ENCODE measurements at regions of chr12 and their contacts with region 1.

Region 1: GRCh38 chr12:125402874-125403789 is 337.9 kb downstream of the AACS start:
- DNase-seq: peak; percentile 44
- ATAC-seq: peak; percentile 75
- H3K4me3 ChIP-seq: no peak overlapping the region
- H3K27ac ChIP-seq: no peak overlapping the region
- H3K4me1 ChIP-seq: no peaks in the 10 kb centered on the region
- H3K27me3 ChIP-seq: peaks cover 5% of the 10 kb centered on the region
- CTCF ChIP-seq: peak; percentile 54 to 81 (median 76)
- POLR2A ChIP-seq: no peak
- RAD21 ChIP-seq: peak; percentile 85

Region 2: DNA sequence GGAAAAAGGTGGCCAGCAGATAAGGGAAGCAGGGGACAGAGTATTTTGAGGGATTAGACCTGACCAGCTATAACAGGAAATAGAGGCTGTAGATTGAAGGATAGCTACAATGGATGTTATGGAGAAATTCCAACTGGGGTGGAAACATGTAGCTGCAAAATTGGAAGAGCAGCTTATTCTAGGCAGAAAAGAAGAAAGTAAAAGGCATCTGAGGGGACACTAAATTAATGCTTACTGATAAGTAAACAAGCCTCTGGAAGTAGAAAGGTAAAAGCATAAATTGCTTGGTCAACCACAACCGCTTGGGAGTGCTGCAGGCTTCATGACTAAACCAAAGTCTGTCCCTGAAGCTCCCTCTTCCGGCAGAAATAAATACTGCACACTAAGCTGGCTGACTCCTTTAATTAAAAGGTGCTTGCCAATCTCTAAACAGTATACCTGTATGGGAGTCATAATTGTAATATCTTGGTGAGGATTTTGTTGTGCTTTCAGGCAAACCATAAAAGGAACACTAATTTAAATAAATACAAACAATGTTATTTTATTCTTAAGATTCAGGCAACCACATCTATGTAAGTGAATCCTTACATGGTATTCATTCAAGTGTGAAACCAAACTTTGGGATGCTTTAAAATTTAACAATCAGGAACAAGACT is 496.4 kb before region 1 on chr12:
- CTCF ChIA-PET with region 1: no interaction called
- POLR2A ChIA-PET with region 1: no interaction called
- RAD21 ChIA-PET with region 1: no interaction called
- intact Hi-C with region 1: loop called (anchors 10 kb)
- DNase-seq: peak; percentile 94
- ATAC-seq: peak; percentile 55
- H3K4me3 ChIP-seq: no peak overlapping the region
- H3K27ac ChIP-seq: peak overlapping the region; percentile 26; the same call in 1 of the 2 replicates
- H3K4me1 ChIP-seq: peaks cover 38 to 55% of the 10 kb centered on the region in 2 experiments
- H3K27me3 ChIP-seq: no peaks in the 10 kb centered on the region
- CTCF ChIP-seq: peak in 2 of 3 experiments; percentile 95 to 99; a peak in 4 of 6 replicates
- POLR2A ChIP-seq: no peak
- RAD21 ChIP-seq: no peak

Region 3: GRCh38 chr12:125029761-125030358 is 373.3 kb before region 1 on chr12:
- CTCF ChIA-PET with region 1: no interaction called
- POLR2A ChIA-PET with region 1: no interaction called
- RAD21 ChIA-PET with region 1: no interaction called
- intact Hi-C with region 1: no loop called
- DNase-seq: no peak
- ATAC-seq: no peak
- H3K4me3 ChIP-seq: no peak overlapping the region
- H3K27ac ChIP-seq: no peak overlapping the region
- H3K4me1 ChIP-seq: no peaks in the 10 kb centered on the region
- H3K27me3 ChIP-seq: no peaks in the 10 kb centered on the region
- CTCF ChIP-seq: no peak
- POLR2A ChIP-seq: no peak
- RAD21 ChIP-seq: no peak

Region 4: DNA sequence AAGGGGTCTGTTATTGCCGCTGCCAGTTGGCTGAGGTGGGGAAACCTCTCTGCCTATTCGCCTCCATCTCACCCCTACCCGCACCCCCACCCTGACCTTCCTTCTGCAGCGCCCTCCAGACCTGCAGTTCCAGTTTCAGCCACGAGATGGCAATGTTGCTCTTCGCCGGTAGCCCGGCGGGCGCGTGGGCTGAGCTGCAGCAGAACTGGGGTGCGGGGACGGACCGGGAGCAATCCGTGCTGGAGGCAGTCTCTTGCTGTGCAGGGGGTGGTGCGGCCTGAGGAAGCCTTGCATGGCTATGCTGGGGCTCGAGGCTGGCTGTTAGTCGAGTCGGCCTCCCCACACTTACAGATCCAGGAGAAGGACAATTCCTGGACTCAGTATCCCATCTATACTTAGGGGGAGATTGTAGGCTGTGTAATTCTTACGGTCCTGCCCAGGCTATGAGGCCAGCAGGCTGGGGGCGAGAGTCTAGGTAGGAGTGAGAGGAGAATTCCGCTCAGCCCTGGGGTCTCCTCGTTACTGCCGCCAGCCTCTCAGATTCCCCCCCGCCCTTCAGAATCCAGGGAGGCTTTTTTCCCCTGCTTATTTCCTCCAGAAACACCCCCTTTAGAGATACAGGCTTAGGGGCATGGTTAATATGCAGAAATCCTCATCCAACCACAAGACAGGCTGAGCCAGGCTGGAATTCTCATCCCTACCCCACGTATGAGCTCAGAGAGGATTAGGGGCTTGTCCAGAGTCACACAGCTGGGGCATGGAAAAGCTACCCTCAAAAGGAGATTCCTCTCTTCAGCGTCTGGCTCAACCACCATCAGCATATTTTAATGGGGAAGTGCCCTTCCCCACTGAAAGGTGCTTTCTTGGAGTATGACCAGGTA is 219.7 kb before region 1 on chr12:
- CTCF ChIA-PET with region 1: interaction called, 36 read pairs
- POLR2A ChIA-PET with region 1: no interaction called
- RAD21 ChIA-PET with region 1: interaction called in 1 of 2 experiments, 3 read pairs
- intact Hi-C with region 1: loop called (anchors 1 kb)
- DNase-seq: peak; percentile 45
- ATAC-seq: peak; percentile 72
- H3K4me3 ChIP-seq: peak overlapping the region in 1 of 2 experiments; percentile 24; a peak in 1 of 4 replicates
- H3K27ac ChIP-seq: no peak overlapping the region
- H3K4me1 ChIP-seq: peaks cover 0 to 16% of the 10 kb centered on the region in 2 experiments; a peak in 2 of 4 replicates
- H3K27me3 ChIP-seq: peaks cover 11% of the 10 kb centered on the region; the same call in 1 of the 2 replicates
- CTCF ChIP-seq: peak; percentile 91 to 99 (median 97)
- POLR2A ChIP-seq: no peak
- RAD21 ChIP-seq: peak; percentile 98

Region 5: GRCh38 chr12:125240717-125241116 is 162.4 kb before region 1 on chr12:
- CTCF ChIA-PET with region 1: interaction called, 11 read pairs
- POLR2A ChIA-PET with region 1: no interaction called
- RAD21 ChIA-PET with region 1: no interaction called
- intact Hi-C with region 1: loop called (anchors 1 kb)
- DNase-seq: no peak
- ATAC-seq: no peak
- H3K4me3 ChIP-seq: no peak overlapping the region
- H3K27ac ChIP-seq: no peak overlapping the region
- H3K4me1 ChIP-seq: no peaks in the 10 kb centered on the region
- H3K27me3 ChIP-seq: peaks cover 32% of the 10 kb centered on the region
- CTCF ChIP-seq: no peak
- POLR2A ChIP-seq: no peak
- RAD21 ChIP-seq: no peak

Region 6: DNA sequence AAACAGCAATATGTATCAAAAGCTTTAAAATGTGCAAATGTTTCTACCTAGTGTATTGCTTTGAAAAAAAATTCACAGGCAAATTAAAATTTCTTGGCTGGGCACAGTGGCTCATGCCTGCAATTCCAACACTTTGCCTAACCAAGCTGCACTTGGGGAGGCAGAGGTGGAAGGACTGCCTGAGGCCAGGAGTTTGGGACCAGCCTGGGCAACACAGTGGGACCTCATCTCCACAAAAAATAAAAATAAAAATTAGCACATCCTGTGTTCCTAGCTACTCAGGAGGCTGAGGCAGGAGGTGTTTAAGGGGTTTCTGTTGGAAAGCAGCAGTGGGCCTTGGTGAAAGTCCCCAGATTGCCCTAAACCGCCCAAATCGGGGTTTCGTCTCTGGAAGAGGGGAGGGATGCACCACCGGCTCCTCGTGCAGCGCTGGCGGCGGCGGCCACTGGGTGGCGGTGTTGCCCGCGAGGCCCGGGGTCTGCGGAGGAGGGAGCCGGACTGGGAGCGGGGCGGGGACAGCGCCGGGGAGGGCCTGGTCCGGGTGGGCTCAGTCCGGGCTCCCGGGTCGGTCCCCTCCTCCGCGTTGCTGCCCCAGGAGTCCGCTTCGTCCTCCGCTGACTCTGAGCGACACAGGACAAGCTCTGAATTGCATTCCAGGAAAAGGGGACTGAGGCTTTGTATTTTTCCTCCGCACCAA is 72.3 kb before region 1 on chr12:
- CTCF ChIA-PET with region 1: interaction called, 7 read pairs
- POLR2A ChIA-PET with region 1: no interaction called
- RAD21 ChIA-PET with region 1: interaction called in 1 of 2 experiments, 3 read pairs
- intact Hi-C with region 1: loop called (anchors 1 kb)
- DNase-seq: peak; percentile 8
- ATAC-seq: peak; percentile 100
- H3K4me3 ChIP-seq: no peak overlapping the region
- H3K27ac ChIP-seq: no peak overlapping the region
- H3K4me1 ChIP-seq: no peaks in the 10 kb centered on the region
- H3K27me3 ChIP-seq: peaks cover 32% of the 10 kb centered on the region; the same call in 1 of the 2 replicates
- CTCF ChIP-seq: peak; percentile 56 to 84 (median 82); a peak in 5 of 6 replicates
- POLR2A ChIP-seq: no peak
- RAD21 ChIP-seq: peak; percentile 78

Measured in HCT116 (cell line).